ENCODE measurements at regions of chr5 and their contacts with region 1.

Region 1: DNA sequence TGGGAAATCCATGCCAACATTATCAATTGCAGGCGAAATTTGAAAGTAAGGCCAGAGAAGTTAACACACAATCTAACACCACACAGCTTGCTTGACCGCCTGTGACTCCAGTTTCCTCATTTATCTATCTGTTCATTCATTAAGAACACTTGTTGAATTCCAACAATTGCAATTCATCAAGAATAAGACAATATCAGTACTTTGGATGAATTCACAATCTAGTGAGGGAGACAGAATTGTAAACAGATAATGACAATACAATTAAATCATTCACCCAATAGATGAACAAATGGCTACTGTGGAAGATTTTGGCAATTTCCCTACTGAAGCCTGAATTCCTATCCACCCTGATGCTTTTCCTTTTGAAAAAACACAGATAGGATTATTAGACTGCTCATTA is 181.6 kb downstream of the TRIM36 start:
- DNase-seq: no peak
- ATAC-seq: no peak
- H3K4me3 ChIP-seq: no peak overlapping the region
- H3K27ac ChIP-seq: no peak overlapping the region
- H3K4me1 ChIP-seq: no peaks in the 10 kb centered on the region
- H3K27me3 ChIP-seq: no peaks in the 10 kb centered on the region
- CTCF ChIP-seq: no peak
- POLR2A ChIP-seq: no peak

Region 2: GRCh38 chr5:114999176-114999575 is 11.1 kb after region 1 on chr5:
- in situ Hi-C with region 1: no loop called
- intact Hi-C with region 1: loop called (anchors 1 kb)
- DNase-seq: no peak
- ATAC-seq: no peak
- H3K4me3 ChIP-seq: no peak overlapping the region
- H3K27ac ChIP-seq: no peak overlapping the region
- H3K4me1 ChIP-seq: no peaks in the 10 kb centered on the region
- H3K27me3 ChIP-seq: no peaks in the 10 kb centered on the region
- CTCF ChIP-seq: no peak
- POLR2A ChIP-seq: no peak